ENCODE measurements at regions of chr3 and their contacts with region 1.

Region 1: GRCh38 chr3:136250226-136250902 is at the start of gene PCCB:
- DNase-seq: peak; percentile 96
- ATAC-seq: peak; percentile 99
- H3K4me3 Mint-ChIP-seq: peak within 1 kb of the TSS; percentile 83
- H3K27ac Mint-ChIP-seq: peak within 1 kb of the TSS; percentile 91
- H3K4me1 Mint-ChIP-seq: peaks cover 15% of the 10 kb centered on the region
- H3K27me3 Mint-ChIP-seq: no peaks in the 10 kb centered on the region
- total RNA-seq, gene PCCB: 45.3 to 51.8 TPM

Region 2: GRCh38 chr3:135965506-135966270 is 284.7 kb before region 1 on chr3 and contains the start of gene PPP2R3A:
- CTCF ChIA-PET with region 1: no interaction called
- POLR2A ChIA-PET with region 1: no interaction called
- intact Hi-C with region 1: loop called in 1 of 2 experiments (anchors 5 kb)
- DNase-seq: peak; percentile 85
- ATAC-seq: peak; percentile 93
- H3K4me3 Mint-ChIP-seq: peak within 1 kb of the TSS; percentile 65
- H3K27ac Mint-ChIP-seq: no peak within 1 kb of the TSS
- H3K4me1 Mint-ChIP-seq: peaks cover 11% of the 10 kb centered on the region
- H3K27me3 Mint-ChIP-seq: peaks cover 30% of the 10 kb centered on the region
- total RNA-seq, gene PPP2R3A: 0.18 to 0.51 TPM

Region 3: GRCh38 chr3:136142592-136142991 is 107.8 kb before region 1 on chr3:
- CTCF ChIA-PET with region 1: no interaction called
- POLR2A ChIA-PET with region 1: no interaction called
- intact Hi-C with region 1: loop called in 1 of 2 experiments (anchors 5 kb)
- DNase-seq: no peak
- ATAC-seq: peak; percentile 95
- H3K4me3 Mint-ChIP-seq: no peak overlapping the region
- H3K27ac Mint-ChIP-seq: peak overlapping the region; percentile 33
- H3K4me1 Mint-ChIP-seq: peaks cover 34% of the 10 kb centered on the region
- H3K27me3 Mint-ChIP-seq: no peaks in the 10 kb centered on the region

Region 4: GRCh38 chr3:136270179-136270578 is 19.8 kb after region 1 on chr3:
- CTCF ChIA-PET with region 1: interaction called, 3 read pairs
- POLR2A ChIA-PET with region 1: no interaction called
- intact Hi-C with region 1: loop called in 1 of 2 experiments (anchors 2 kb)
- DNase-seq: peak; percentile 11
- ATAC-seq: peak; percentile 95
- H3K4me3 Mint-ChIP-seq: no peak overlapping the region
- H3K27ac Mint-ChIP-seq: no peak overlapping the region
- H3K4me1 Mint-ChIP-seq: peaks cover 34% of the 10 kb centered on the region
- H3K27me3 Mint-ChIP-seq: no peaks in the 10 kb centered on the region

Region 5: GRCh38 chr3:136505676-136506075 is 255.3 kb after region 1 on chr3:
- CTCF ChIA-PET with region 1: no interaction called
- POLR2A ChIA-PET with region 1: no interaction called
- intact Hi-C with region 1: no loop called
- DNase-seq: no peak
- ATAC-seq: no peak
- H3K4me3 Mint-ChIP-seq: no peak overlapping the region
- H3K27ac Mint-ChIP-seq: no peak overlapping the region
- H3K4me1 Mint-ChIP-seq: no peaks in the 10 kb centered on the region
- H3K27me3 Mint-ChIP-seq: no peaks in the 10 kb centered on the region